ENCODE measurements at regions of chr2 and their contacts with region 1.

Region 1: GRCh38 chr2:197168705-197169104 is 141.9 kb downstream of the ANKRD44 start:
- DNase-seq: peak; percentile 84
- H3K4me3 Mint-ChIP-seq: no peak overlapping the region
- H3K27ac Mint-ChIP-seq: peak overlapping the region; percentile 73
- H3K4me1 Mint-ChIP-seq: peaks cover 72% of the 10 kb centered on the region
- H3K27me3 Mint-ChIP-seq: no peaks in the 10 kb centered on the region

Region 2: DNA sequence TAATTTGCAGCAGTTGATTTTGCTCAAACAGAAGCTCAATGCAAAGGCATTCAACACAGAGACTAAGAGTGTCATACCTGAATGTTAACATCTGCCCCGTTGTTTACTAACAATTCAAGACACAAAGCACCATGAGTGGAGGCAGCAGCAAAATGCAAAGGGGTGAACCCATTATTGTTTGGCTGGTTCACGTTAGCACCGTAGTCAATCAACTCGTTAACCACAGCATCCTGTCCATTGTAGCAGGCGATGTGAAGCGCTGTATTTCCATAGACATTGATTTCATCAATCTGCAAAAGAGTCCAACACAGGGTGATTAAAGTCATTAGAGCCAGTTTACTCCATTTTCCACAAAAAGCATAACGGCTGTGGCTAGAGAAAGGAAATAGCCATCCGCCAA is 47.5 kb before region 1 on chr2:
- CTCF ChIA-PET with region 1: interaction called, 134 read pairs
- POLR2A ChIA-PET with region 1: no interaction called
- intact Hi-C with region 1: no loop called
- DNase-seq: no peak
- H3K4me3 Mint-ChIP-seq: no peak overlapping the region
- H3K27ac Mint-ChIP-seq: peak overlapping the region; percentile 19
- H3K4me1 Mint-ChIP-seq: peaks cover 40% of the 10 kb centered on the region
- H3K27me3 Mint-ChIP-seq: no peaks in the 10 kb centered on the region

Region 3: DNA sequence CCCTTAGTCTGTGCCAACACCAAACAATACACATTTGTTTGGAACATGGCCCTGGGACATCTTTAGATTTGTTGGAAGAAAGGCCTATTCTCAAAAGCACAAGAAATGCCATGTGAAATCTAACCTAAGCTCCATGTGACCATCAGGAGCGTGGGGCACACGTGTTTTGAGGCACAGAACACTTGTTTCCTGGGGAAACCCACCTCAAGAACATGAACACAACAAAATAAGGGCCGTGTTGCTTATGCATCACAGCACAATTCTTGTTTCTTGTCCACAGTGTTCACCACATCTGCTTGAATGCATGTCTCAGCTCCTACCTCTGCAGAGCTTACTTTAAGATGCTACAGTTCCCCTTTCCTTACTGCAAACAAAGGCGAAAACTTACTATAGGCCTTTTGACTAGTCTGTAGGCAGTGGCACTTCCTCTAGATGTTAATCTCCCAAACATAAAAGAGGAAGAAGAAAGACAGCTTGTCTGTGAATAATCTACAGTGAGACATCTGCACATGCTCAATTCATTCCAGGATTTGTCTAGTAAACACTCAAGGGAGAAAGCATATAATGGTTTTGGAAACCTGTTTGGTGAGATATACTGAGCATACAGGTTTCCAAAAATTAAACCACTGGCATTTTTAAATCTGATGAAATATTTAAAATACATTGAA is 23.1 kb before region 1 on chr2:
- CTCF ChIA-PET with region 1: interaction called, 17 read pairs
- POLR2A ChIA-PET with region 1: no interaction called
- intact Hi-C with region 1: no loop called
- DNase-seq: no peak
- H3K4me3 Mint-ChIP-seq: no peak overlapping the region
- H3K27ac Mint-ChIP-seq: peak overlapping the region; percentile 87
- H3K4me1 Mint-ChIP-seq: peaks cover 64% of the 10 kb centered on the region
- H3K27me3 Mint-ChIP-seq: no peaks in the 10 kb centered on the region

Region 4: GRCh38 chr2:197179744-197180498 is 11.2 kb after region 1 on chr2:
- CTCF ChIA-PET with region 1: interaction called, 50 read pairs
- POLR2A ChIA-PET with region 1: interaction called, 3 read pairs
- intact Hi-C with region 1: no loop called
- DNase-seq: no peak
- H3K4me3 Mint-ChIP-seq: no peak overlapping the region
- H3K27ac Mint-ChIP-seq: peak overlapping the region; percentile 16
- H3K4me1 Mint-ChIP-seq: peaks cover 66% of the 10 kb centered on the region
- H3K27me3 Mint-ChIP-seq: no peaks in the 10 kb centered on the region

Region 5: DNA sequence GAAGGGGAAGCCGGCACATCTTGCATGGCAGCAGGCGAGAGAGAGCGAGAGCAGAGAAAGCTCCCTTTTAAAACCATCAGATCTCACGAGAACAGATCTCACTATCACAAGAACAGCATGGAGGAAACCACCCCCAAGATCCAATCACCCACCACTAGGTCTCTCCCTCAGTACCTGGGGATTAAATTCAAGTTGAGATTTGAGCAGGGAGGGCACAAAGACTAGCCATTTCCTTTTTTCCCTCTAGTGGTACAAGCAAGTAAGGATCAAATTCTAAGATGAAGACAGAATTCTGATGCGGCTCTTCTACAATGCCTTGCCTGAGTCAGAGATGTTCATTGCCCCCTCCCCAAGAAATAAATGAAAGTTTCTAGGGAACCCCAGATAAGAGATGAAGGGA is 187.4 kb after region 1 on chr2:
- CTCF ChIA-PET with region 1: interaction called, 11 read pairs
- POLR2A ChIA-PET with region 1: no interaction called
- intact Hi-C with region 1: no loop called
- DNase-seq: no peak
- H3K4me3 Mint-ChIP-seq: no peak overlapping the region
- H3K27ac Mint-ChIP-seq: no peak overlapping the region
- H3K4me1 Mint-ChIP-seq: peaks cover 39% of the 10 kb centered on the region
- H3K27me3 Mint-ChIP-seq: no peaks in the 10 kb centered on the region